Activated T-helper 2 cell treated with anti-CD3 and anti-CD28 coated beads, Interferon-gamma antibody, Interleukin-2, Interleukin-4, amounts not matched to agents 10 μg/mL and 5 μg/mL and 100 μg/mL, durations not matched to agents 14 hours and 24 hours and 36 hours (primary cell): ENCODE measurements at regions of chr3 and their contacts with region 1.

Region 1: GRCh38 chr3:27484015-27484844 is at the start of gene SLC4A7:
- DNase-seq: peak; percentile 97
- H3K4me3 Mint-ChIP-seq: peak within 1 kb of the TSS; percentile 93
- H3K27ac Mint-ChIP-seq: peak within 1 kb of the TSS; percentile 88
- H3K4me1 Mint-ChIP-seq: peaks cover 31% of the 10 kb centered on the region
- H3K27me3 Mint-ChIP-seq: no peaks in the 10 kb centered on the region
- total RNA-seq, gene SLC4A7: 76.4 and 77.8 TPM in 2 replicates

Region 2: GRCh38 chr3:26915208-26915607 is 569.0 kb before region 1 on chr3:
- intact Hi-C with region 1: no loop called
- DNase-seq: no peak
- H3K4me3 Mint-ChIP-seq: no peak overlapping the region
- H3K27ac Mint-ChIP-seq: no peak overlapping the region
- H3K4me1 Mint-ChIP-seq: no peaks in the 10 kb centered on the region
- H3K27me3 Mint-ChIP-seq: no peaks in the 10 kb centered on the region

Region 3: DNA sequence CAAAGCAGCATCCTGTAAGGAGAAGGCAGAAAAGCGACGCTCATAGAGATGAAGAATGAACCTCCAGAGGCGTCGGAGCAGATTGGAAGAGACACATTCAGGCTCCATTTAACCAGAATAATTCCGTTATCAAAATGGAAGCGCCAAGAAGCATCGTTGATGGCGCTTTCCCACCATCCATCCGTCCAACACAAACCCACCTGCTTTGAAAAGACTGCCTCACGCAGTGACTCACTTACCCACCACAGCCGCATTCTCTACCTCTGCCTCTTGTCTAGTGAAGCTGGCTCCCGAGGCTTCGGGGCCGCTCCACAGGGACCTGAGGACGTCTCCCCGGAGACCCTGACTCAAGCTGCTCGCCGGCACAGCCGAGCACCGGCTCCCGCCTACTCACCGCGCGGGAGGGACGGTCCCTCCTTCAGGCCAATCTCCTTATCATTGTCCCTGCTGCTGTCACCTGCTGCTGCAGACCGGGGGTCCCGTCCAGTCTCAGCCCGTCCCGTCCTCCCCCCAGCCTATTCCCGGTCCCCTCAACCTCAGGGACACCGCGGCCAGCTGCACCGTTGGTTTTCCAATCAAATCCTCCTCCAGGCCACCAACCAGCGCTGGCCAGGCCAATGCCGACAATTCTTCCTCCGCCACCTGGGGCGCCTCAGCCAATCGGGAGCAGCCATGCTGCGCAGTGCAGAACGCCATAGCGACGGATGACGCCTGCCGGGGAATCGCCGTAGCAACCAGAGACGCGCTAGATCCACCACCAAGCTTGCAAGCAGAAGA is 115.2 kb before region 1 on chr3 and contains the start of gene NEK10:
- intact Hi-C with region 1: loop called (anchors 2 kb)
- DNase-seq: peak; percentile 89
- H3K4me3 Mint-ChIP-seq: peak within 1 kb of the TSS; percentile 92
- H3K27ac Mint-ChIP-seq: peak within 1 kb of the TSS; percentile 48
- H3K4me1 Mint-ChIP-seq: peaks cover 15% of the 10 kb centered on the region
- H3K27me3 Mint-ChIP-seq: peaks cover 2% of the 10 kb centered on the region
- total RNA-seq, gene NEK10: 0.80 and 0.84 TPM in 2 replicates

Region 4: DNA sequence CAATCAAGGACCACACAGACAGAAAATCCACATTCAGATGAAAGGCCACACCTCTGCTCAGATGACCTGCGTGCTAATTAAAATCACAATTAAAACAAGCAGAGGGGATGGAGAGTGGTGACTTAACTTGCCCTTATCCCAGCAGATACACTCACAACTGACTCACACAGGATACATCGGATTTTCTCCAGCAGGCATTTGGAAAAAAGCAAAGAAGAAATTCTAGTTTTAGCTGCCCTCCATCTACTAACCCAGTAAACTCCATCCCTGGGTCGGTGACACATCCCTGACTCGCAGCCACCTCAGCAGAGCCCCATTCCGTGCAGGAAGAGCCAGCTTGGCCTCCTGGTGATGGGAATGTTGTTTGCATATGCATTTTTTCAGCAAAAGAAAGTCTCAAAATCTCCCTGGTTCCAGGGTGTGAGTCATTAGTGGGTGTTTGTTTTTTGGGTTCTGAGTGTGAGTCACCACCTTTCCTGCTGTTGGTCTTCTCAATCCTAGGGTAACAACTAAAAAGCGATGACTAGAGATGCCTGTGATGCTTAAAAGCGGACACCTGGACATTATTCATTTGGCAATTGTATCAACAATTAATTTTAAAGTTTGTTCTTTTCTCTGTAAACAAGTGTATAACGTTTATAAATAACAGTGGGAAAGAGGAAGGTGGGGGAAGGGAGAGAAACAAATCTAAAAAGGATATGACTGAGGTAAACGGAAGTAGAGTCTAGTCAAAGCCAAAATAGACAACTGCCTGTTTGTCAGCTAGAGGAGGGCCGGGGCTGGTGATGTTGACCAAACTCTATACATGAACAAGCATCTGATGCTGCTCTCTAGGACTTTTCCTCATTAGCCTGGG is 49.7 kb after region 1 on chr3:
- intact Hi-C with region 1: loop called (anchors 5 kb)
- DNase-seq: no peak
- H3K4me3 Mint-ChIP-seq: no peak overlapping the region
- H3K27ac Mint-ChIP-seq: peak overlapping the region; percentile 82
- H3K4me1 Mint-ChIP-seq: peaks cover 21% of the 10 kb centered on the region
- H3K27me3 Mint-ChIP-seq: no peaks in the 10 kb centered on the region

Region 5: GRCh38 chr3:27632431-27633223 is 148.4 kb after region 1 on chr3:
- intact Hi-C with region 1: loop called (anchors 2 kb)
- DNase-seq: peak; percentile 34
- H3K4me3 Mint-ChIP-seq: peak overlapping the region; percentile 93
- H3K27ac Mint-ChIP-seq: peak overlapping the region; percentile 90
- H3K4me1 Mint-ChIP-seq: peaks cover 44% of the 10 kb centered on the region
- H3K27me3 Mint-ChIP-seq: no peaks in the 10 kb centered on the region